Endothelial cell of umbilical vein (primary cell): ENCODE measurements at regions of chr15 and their contacts with region 1.

Region 1: GRCh38 chr15:73950831-73951561 is 24.7 kb downstream of the LOXL1 start:
- DNase-seq: peak; percentile 98
- H3K4me3 ChIP-seq: no peak overlapping the region
- H3K27ac ChIP-seq: peak overlapping the region; percentile 84
- H3K4me1 ChIP-seq: peaks cover 9% of the 10 kb centered on the region
- H3K27me3 ChIP-seq: no peaks in the 10 kb centered on the region
- CTCF ChIP-seq: peak; percentile 94 to 95
- POLR2A ChIP-seq: peak; percentile 32

Region 2: DNA sequence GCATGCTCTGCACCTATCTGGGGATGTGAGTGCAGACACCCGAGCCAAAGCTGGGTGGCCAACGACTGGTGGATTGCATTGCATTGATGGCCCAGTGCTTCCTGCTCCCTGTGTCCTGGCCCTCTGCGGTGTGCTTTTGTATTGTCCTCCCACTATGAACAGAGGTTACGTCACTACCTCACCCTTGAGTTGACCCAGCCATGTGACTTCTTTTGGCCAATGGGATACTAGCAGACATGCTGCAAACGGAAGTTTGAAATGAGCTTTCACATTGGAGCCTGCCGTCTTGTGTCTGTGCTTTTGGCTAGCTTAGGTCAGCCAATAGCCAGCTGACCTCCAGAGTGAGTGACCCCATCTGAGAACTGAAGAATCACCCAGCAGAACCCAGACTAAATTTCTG is 92.9 kb before region 1 on chr15:
- CTCF ChIA-PET with region 1: no interaction called
- POLR2A ChIA-PET with region 1: no interaction called
- dilution Hi-C with region 1: no loop called
- intact Hi-C with region 1: no loop called
- DNase-seq: no peak
- H3K4me3 ChIP-seq: no peak overlapping the region
- H3K27ac ChIP-seq: no peak overlapping the region
- H3K4me1 ChIP-seq: no peaks in the 10 kb centered on the region
- H3K27me3 ChIP-seq: peaks cover 5 to 15% of the 10 kb centered on the region in 2 experiments
- CTCF ChIP-seq: no peak
- POLR2A ChIP-seq: no peak

Region 3: GRCh38 chr15:73873889-73874511 is 77.0 kb before region 1 on chr15:
- CTCF ChIA-PET with region 1: interaction called, 27 read pairs
- POLR2A ChIA-PET with region 1: no interaction called
- dilution Hi-C with region 1: no loop called
- intact Hi-C with region 1: no loop called
- DNase-seq: peak; percentile 60
- H3K4me3 ChIP-seq: no peak overlapping the region
- H3K27ac ChIP-seq: no peak overlapping the region
- H3K4me1 ChIP-seq: peaks cover 8% of the 10 kb centered on the region
- H3K27me3 ChIP-seq: peaks cover 11 to 14% of the 10 kb centered on the region in 2 experiments
- CTCF ChIP-seq: peak; percentile 49 to 52
- POLR2A ChIP-seq: no peak

Region 4: DNA sequence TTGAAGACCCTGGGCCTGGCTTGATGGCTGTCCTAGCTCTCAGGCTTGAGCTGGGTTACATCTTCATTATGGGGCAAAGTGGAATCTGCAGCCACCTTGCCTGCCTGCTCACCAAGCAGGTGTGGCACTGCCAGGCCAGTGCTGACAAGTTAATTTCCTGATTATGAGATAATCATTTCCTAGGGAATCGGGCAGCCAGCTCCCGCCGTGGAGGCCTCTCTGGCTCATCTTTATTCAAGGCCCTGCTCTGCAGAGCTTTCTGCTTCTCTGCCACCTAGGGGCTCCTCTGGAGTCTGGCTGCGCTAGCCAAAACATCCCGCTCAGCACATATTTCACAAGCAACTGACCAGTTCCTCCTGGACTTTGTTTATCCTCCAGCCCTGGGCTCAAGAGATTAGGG is 14.8 kb before region 1 on chr15:
- CTCF ChIA-PET with region 1: interaction called, 29 read pairs
- POLR2A ChIA-PET with region 1: no interaction called
- dilution Hi-C with region 1: no loop called
- intact Hi-C with region 1: no loop called
- DNase-seq: no peak
- H3K4me3 ChIP-seq: no peak overlapping the region
- H3K27ac ChIP-seq: no peak overlapping the region
- H3K4me1 ChIP-seq: peaks cover 24% of the 10 kb centered on the region
- H3K27me3 ChIP-seq: no peaks in the 10 kb centered on the region
- CTCF ChIP-seq: peak in 1 of 2 donors; percentile 20
- POLR2A ChIP-seq: no peak

Region 5: GRCh38 chr15:73982222-73982962 is 31.4 kb after region 1 on chr15:
- CTCF ChIA-PET with region 1: interaction called, 10 read pairs
- POLR2A ChIA-PET with region 1: no interaction called
- dilution Hi-C with region 1: no loop called
- intact Hi-C with region 1: no loop called
- DNase-seq: peak; percentile 53
- H3K4me3 ChIP-seq: no peak overlapping the region
- H3K27ac ChIP-seq: peak overlapping the region; percentile 70
- H3K4me1 ChIP-seq: peaks cover 27% of the 10 kb centered on the region
- H3K27me3 ChIP-seq: no peaks in the 10 kb centered on the region
- CTCF ChIP-seq: no peak
- POLR2A ChIP-seq: peak; percentile 20

Region 6: GRCh38 chr15:74044267-74045110 is 93.5 kb after region 1 on chr15:
- CTCF ChIA-PET with region 1: interaction called, 18 read pairs
- POLR2A ChIA-PET with region 1: no interaction called
- dilution Hi-C with region 1: no loop called
- intact Hi-C with region 1: no loop called
- DNase-seq: no peak
- H3K4me3 ChIP-seq: no peak overlapping the region
- H3K27ac ChIP-seq: no peak overlapping the region
- H3K4me1 ChIP-seq: peaks cover 9% of the 10 kb centered on the region
- H3K27me3 ChIP-seq: no peaks in the 10 kb centered on the region
- CTCF ChIP-seq: no peak
- POLR2A ChIP-seq: no peak

Region 7: DNA sequence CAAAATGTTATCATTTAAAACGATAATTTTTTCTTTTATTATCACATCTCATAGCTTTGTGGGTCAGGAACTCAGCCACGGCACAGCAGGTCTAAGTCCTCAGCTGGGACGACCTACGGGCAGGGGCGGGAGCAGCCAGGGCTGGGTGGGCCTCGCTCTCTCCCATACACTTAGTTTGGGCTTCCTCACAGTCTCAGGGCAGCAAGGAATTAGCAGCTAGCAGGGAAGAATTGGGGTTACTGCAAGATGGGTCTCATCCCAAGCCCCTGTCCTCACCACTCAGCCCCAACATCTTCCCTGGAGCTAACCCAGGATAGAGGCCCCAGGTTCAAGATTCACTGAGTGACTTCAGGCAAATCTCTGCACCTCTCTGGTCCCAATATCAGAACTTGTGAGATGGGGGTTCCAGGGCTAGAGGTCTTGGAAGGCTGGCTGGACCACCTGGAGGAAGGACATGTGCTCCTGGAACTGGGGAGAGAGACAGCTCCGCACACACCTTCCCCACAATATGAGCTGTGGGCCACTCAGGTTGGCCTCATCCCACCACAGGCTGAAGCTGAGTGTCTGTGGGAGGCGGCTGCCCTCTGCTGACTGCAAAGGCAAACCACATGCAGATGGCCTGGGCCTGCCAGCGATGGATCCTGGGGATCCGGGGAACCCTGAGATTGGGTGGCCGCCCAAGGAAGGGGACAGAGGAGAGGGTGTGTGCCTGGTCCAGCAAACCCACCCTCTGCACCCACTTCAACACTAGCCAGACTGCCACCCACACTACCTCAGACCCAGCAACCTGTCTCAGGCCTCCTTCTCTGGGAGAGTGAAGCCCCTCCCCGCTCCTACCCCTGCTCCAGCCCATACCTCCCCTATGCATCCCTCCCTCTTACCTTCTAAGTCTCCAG is 371.4 kb after region 1 on chr15:
- CTCF ChIA-PET with region 1: interaction called, 55 read pairs
- POLR2A ChIA-PET with region 1: no interaction called
- dilution Hi-C with region 1: no loop called
- intact Hi-C with region 1: loop called (anchors 5 kb)
- DNase-seq: peak; percentile 49
- H3K4me3 ChIP-seq: no peak overlapping the region
- H3K27ac ChIP-seq: no peak overlapping the region
- H3K4me1 ChIP-seq: no peaks in the 10 kb centered on the region
- H3K27me3 ChIP-seq: peaks cover 0 to 1% of the 10 kb centered on the region in 2 experiments
- CTCF ChIP-seq: peak; percentile 74 to 93
- POLR2A ChIP-seq: no peak

Region 8: GRCh38 chr15:75229191-75230015 is 1278.4 kb after region 1 on chr15:
- CTCF ChIA-PET with region 1: no interaction called
- POLR2A ChIA-PET with region 1: no interaction called
- dilution Hi-C with region 1: no loop called
- intact Hi-C with region 1: no loop called
- DNase-seq: no peak
- H3K4me3 ChIP-seq: no peak overlapping the region
- H3K27ac ChIP-seq: no peak overlapping the region
- H3K4me1 ChIP-seq: no peaks in the 10 kb centered on the region
- H3K27me3 ChIP-seq: peaks cover under 1 to 1% of the 10 kb centered on the region in 2 experiments
- CTCF ChIP-seq: no peak
- POLR2A ChIP-seq: no peak